Left ventricle myocardium inferior (tissue), 1 donor: ENCODE measurements at regions of chr16 and their contacts with region 1.

Region 1: DNA sequence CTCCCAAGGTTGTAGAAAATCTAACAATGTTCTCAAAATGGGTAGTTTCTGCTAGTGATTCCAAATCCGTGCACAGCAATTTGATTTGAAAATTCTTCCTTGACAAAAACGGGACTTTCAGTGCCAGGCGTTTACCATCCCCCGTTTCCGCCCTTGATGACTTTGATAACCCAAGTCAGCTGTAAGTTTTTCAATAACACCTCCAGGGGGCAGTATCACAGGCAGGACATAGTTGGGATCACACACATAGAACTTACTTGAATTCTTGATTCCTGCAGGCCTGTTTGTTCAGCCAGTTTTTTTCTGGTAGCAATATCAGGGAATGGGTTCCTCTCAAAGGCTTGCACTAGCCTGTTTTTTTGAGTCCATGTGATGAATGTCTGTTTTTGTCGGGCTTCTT is 5.6 kb downstream of the DUXB start:
- DNase-seq: no peak
- H3K4me3 ChIP-seq: no peak overlapping the region
- H3K27ac ChIP-seq: no peak overlapping the region
- H3K4me1 ChIP-seq: no peaks in the 10 kb centered on the region
- H3K27me3 ChIP-seq: no peaks in the 10 kb centered on the region
- CTCF ChIP-seq: no peak

Region 2: DNA sequence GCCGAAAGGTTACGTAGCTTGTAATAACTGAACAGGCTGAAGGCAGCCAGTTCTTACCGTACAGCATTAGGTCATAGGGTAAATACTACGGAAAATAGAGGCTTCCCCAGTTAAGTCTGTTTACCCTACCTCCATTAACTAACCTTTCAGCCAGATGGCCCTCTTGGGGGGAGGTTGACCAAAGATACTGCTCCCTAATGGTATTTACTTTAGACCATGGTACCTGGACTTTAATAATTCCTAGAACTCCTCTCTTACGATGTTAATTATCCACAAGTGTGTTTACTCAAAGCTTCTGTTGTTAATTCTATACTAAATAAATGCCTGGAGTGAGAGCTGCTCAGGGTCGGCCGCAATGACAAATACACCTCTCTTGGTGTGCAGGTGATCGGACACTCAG is 62.8 kb before region 1 on chr16:
- intact Hi-C with region 1: loop called (anchors 10 kb)
- DNase-seq: no peak
- H3K4me3 ChIP-seq: no peak overlapping the region
- H3K27ac ChIP-seq: no peak overlapping the region
- H3K4me1 ChIP-seq: peaks cover 6% of the 10 kb centered on the region
- H3K27me3 ChIP-seq: no peaks in the 10 kb centered on the region
- CTCF ChIP-seq: no peak

Region 3: DNA sequence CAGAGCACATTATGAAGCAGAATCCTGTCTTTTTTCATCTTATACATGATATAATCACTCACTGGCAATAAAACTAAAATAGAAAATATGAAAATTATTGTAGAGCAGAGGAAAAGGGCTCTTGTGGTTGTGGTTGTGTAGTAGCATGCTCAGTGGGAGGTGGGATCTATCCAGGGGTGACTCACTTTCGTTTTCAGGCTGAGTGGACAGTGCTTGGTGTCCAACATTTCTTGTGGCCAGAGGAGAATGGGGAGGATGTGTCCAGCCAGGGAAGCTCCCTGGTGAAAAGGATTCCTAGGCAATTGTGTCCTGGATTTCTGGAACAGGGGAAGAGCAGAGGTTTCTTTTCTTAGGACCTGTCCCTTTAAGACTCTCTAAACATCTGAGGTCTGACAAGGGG is 62.5 kb after region 1 on chr16:
- intact Hi-C with region 1: no loop called
- DNase-seq: no peak
- H3K4me3 ChIP-seq: no peak overlapping the region
- H3K27ac ChIP-seq: no peak overlapping the region
- H3K4me1 ChIP-seq: no peaks in the 10 kb centered on the region
- H3K27me3 ChIP-seq: no peaks in the 10 kb centered on the region
- CTCF ChIP-seq: no peak

Region 4: DNA sequence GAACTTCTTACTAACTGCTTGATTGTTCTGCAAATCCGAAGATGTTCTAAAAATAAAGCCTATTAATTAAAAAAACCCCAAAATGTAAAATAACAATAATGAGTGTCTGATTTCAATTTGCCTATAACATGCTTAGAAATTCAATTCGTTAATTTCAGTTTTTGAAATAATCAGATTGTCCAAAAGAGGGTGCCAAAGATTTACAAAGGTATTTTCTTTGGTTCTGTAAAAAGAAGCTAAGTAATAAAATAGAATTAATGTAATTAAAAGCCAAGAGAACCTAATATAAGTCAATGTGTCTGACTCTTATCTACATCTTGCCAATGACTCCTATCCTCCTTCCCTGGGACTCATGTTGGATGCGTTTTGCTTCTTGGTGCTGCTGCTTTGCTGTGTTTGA is 105.6 kb after region 1 on chr16:
- intact Hi-C with region 1: no loop called
- DNase-seq: no peak
- H3K4me3 ChIP-seq: no peak overlapping the region
- H3K27ac ChIP-seq: no peak overlapping the region
- H3K4me1 ChIP-seq: no peaks in the 10 kb centered on the region
- H3K27me3 ChIP-seq: peaks cover 21% of the 10 kb centered on the region
- CTCF ChIP-seq: no peak